ENCODE measurements at regions of chr16 and their contacts with region 1.

Region 1: GRCh38 chr16:87778830-87779579 is 13.2 kb upstream of the KLHDC4 start:
- DNase-seq: peak; percentile 84 to 96 (median 86)
- H3K4me3 ChIP-seq: no peak overlapping the region
- H3K27ac ChIP-seq: no peak overlapping the region
- H3K4me1 ChIP-seq: peaks cover 0 to 7% of the 10 kb centered on the region in 2 donors
- H3K27me3 ChIP-seq: no peaks in the 10 kb centered on the region
- CTCF ChIP-seq: peak; percentile 94 to 99 (median 98)
- POLR2A ChIP-seq: no peak

Region 2: GRCh38 chr16:87834623-87835407 is 55.8 kb after region 1 on chr16:
- intact Hi-C with region 1: no loop called
- DNase-seq: peak in 1 of 7 donors; percentile 76
- H3K4me3 ChIP-seq: no peak overlapping the region
- H3K27ac ChIP-seq: no peak overlapping the region
- H3K4me1 ChIP-seq: no peaks in the 10 kb centered on the region
- H3K27me3 ChIP-seq: no peaks in the 10 kb centered on the region
- CTCF ChIP-seq: no peak
- POLR2A ChIP-seq: no peak

Region 3: GRCh38 chr16:87895641-87896141 is 116.7 kb after region 1 on chr16:
- intact Hi-C with region 1: loop called in 1 of 2 experiments (anchors 10 kb)
- DNase-seq: peak in 2 of 7 donors; percentile 25 to 51
- H3K4me3 ChIP-seq: no peak overlapping the region
- H3K27ac ChIP-seq: no peak overlapping the region
- H3K4me1 ChIP-seq: peaks cover 0 to 5% of the 10 kb centered on the region in 2 donors
- H3K27me3 ChIP-seq: no peaks in the 10 kb centered on the region
- CTCF ChIP-seq: no peak
- POLR2A ChIP-seq: no peak

Measured in adrenal gland (tissue), 19 donors.